ENCODE measurements at regions of chr5 and their contacts with region 1.

Region 1: DNA sequence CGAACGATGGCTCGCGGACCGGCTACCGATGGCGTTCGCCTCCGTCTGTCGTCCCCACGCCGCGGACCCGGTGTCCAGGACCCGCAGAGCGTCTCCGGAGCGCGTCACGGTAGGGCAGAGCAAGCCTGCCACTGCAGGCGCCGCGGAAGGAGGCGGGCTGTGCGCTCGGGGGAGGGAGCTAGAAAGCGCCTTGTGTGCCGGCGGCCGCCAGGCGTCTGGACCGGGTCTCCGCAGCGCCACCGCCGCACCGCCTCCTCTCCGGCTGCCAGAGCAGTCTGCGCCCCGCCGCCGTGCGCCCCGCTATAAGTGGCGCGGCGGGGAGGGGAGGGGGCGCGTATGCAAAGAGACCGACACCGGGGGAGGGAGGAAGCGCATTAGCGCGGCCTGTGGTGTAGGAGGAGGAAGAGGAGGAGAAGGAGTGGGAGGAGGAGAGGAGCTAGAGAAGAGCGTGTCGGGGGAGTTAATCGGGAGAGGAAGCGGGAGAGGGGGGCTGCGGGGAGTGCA is at the start of gene ENC1:
- DNase-seq: peak; percentile 48 to 92
- ATAC-seq: peak; percentile 76 to 87
- H3K4me3 ChIP-seq: peak within 1 kb of the TSS; percentile 90
- H3K27ac ChIP-seq: peak within 1 kb of the TSS; percentile 92 to 94
- H3K4me1 ChIP-seq: peaks cover 40% of the 10 kb centered on the region
- CTCF ChIP-seq: no peak; the same call in 2 of the 3 replicates
- EP300 ChIP-seq: no peak
- POLR2A ChIP-seq: peak; percentile 97
- RAD21 ChIP-seq: peak; percentile 32 to 57; a peak in 3 of 5 replicates
- polyA plus RNA-seq, gene ENC1: 20.0 and 22.5 TPM in 2 replicates

Region 2: GRCh38 chr5:73911761-73912393 is 728.6 kb before region 1 on chr5:
- CTCF ChIA-PET with region 1: interaction called, 18 read pairs
- POLR2A ChIA-PET with region 1: interaction called, 3 read pairs
- DNase-seq: no peak
- ATAC-seq: no peak
- H3K4me3 ChIP-seq: no peak overlapping the region
- H3K27ac ChIP-seq: no peak overlapping the region
- H3K4me1 ChIP-seq: no peaks in the 10 kb centered on the region
- CTCF ChIP-seq: no peak
- EP300 ChIP-seq: no peak
- POLR2A ChIP-seq: no peak
- RAD21 ChIP-seq: no peak

Region 3: DNA sequence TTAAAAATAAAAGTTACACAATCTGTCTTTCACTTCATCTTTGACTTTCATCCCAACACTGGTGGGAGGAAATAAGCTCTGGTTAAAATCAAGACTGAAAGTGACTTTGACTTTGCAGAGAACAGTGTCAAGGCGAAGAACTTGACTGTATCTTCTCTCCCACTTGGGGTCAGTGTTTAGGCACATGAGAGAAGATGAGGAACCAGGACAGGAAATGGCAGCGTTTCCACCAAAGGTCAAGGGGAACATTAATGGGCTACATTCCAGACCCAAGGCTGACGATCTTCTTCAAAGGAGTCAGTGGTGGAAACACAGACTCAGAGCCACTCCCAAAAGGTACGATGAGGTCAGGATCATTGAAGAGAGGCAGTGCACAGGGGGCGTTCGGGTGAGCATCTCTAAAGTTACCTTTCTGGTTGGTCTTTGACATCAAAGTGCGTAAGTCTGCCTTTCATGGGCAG is 605.0 kb before region 1 on chr5:
- CTCF ChIA-PET with region 1: interaction called, 19 read pairs
- POLR2A ChIA-PET with region 1: interaction called, 4 read pairs
- DNase-seq: peak; percentile 16 to 61
- ATAC-seq: peak; percentile 67 to 81; a peak in 5 of 6 replicates
- H3K4me3 ChIP-seq: no peak overlapping the region
- H3K27ac ChIP-seq: peak overlapping the region in 1 of 2 experiments; percentile 23; a peak in 1 of 6 replicates
- H3K4me1 ChIP-seq: peaks cover 19% of the 10 kb centered on the region; the same call in 2 of the 3 replicates
- CTCF ChIP-seq: peak; percentile 59
- EP300 ChIP-seq: no peak
- POLR2A ChIP-seq: no peak
- RAD21 ChIP-seq: peak; percentile 77 to 80

Region 4: DNA sequence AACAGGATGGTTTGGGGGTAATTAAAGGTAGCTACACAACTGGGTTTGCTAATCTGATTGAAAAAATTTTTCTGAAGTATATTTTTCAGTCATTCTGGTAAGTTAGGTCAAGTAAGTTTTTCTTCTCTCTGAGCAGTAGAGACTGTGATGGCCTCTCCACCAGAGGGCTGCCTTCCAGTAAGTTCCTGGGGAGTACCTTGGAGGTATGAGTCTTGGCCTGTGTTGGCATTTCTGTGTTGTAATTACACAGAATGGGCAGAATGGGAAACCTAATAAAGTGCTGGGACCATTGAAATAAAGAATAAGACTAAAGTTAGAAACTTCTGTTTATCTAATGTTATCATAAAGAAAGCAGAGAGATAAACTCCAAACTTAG is 583.7 kb before region 1 on chr5:
- CTCF ChIA-PET with region 1: interaction called, 11 read pairs
- POLR2A ChIA-PET with region 1: interaction called, 3 read pairs
- DNase-seq: peak; percentile 29 to 56
- ATAC-seq: peak; percentile 86 to 88; a peak in 5 of 6 replicates
- H3K4me3 ChIP-seq: no peak overlapping the region
- H3K27ac ChIP-seq: no peak overlapping the region
- H3K4me1 ChIP-seq: no peaks in the 10 kb centered on the region
- CTCF ChIP-seq: peak; percentile 51
- EP300 ChIP-seq: no peak
- POLR2A ChIP-seq: no peak
- RAD21 ChIP-seq: peak; percentile 58 to 67

Region 5: GRCh38 chr5:74543156-74543995 is 97.1 kb before region 1 on chr5:
- CTCF ChIA-PET with region 1: interaction called, 8 read pairs
- POLR2A ChIA-PET with region 1: interaction called, 47 read pairs
- DNase-seq: peak; percentile 81 to 82
- ATAC-seq: peak; percentile 93
- H3K4me3 ChIP-seq: peak overlapping the region; percentile 5
- H3K27ac ChIP-seq: peak overlapping the region; percentile 78 to 85
- H3K4me1 ChIP-seq: peaks cover 49% of the 10 kb centered on the region
- CTCF ChIP-seq: no peak
- EP300 ChIP-seq: peak; percentile 70 to 82; a peak in 3 of 5 replicates
- POLR2A ChIP-seq: no peak
- RAD21 ChIP-seq: peak; percentile 6 to 54; a peak in 3 of 5 replicates

Measured in A549 (cell line).